ENCODE measurements at regions of chr21 and their contacts with region 1.

Region 1: DNA sequence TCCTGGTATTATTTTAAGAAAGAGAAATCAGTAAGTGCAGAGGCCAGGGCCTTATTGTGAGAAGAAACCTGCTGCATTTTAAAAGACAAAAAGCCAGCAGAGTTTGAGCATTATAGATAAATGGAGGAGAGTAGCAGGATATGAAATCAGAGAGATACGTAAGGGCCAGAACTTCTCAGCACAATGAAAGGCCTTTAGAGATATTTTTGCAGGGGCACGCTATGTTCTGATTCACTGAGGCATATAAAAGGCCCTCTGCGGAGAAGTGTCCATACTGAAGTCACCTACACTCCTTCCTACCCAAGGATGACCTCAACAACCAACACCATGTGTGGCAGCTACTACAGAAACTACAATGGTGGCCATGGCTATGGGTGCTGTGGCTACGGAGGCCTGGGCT is at the start of gene KRTAP6-3:
- DNase-seq: no peak
- ATAC-seq: no peak
- H3K4me3 ChIP-seq: no peak within 1 kb of the TSS
- H3K27ac ChIP-seq: no peak within 1 kb of the TSS
- H3K4me1 ChIP-seq: no peaks in the 10 kb centered on the region
- H3K27me3 ChIP-seq: no peaks in the 10 kb centered on the region
- CTCF ChIP-seq: no peak
- POLR2A ChIP-seq: no peak
- RAD21 ChIP-seq: no peak
- total RNA-seq, gene KRTAP6-3: not detected in 2 replicates

Region 2: DNA sequence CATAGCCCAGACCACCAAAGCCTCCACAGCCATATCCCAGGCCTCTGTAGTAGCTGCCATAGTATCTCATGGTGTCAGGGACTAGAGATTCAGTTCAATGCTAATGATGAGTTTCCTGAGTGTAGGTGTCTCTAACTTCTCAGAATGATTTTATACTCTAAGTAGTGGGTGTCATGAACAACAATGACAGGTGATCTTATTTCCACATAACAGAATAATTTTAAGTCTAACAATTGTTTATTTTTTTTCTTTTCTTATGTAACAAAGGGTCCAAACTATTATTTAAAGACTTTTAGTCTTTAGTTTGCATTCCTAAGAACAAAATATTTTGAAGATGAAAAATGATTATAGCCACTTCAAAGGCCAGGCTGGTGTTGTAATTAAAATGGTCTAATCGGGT is 50.4 kb before region 1 on chr21 and contains the start of gene KRTAP19-6:
- CTCF ChIA-PET with region 1: no interaction called
- POLR2A ChIA-PET with region 1: no interaction called
- dilution Hi-C with region 1: no loop called
- in situ Hi-C with region 1: no loop called
- intact Hi-C with region 1: loop called (anchors 1 kb)
- DNase-seq: no peak
- ATAC-seq: no peak
- H3K4me3 ChIP-seq: no peak within 1 kb of the TSS
- H3K27ac ChIP-seq: no peak within 1 kb of the TSS
- H3K4me1 ChIP-seq: no peaks in the 10 kb centered on the region
- H3K27me3 ChIP-seq: no peaks in the 10 kb centered on the region
- CTCF ChIP-seq: no peak
- POLR2A ChIP-seq: no peak
- RAD21 ChIP-seq: no peak
- total RNA-seq, gene KRTAP19-6: not detected in 2 replicates